SK-N-SH (cell line): ENCODE measurements at regions of chr16 and their contacts with region 1.

Region 1: GRCh38 chr16:81006814-81007696 is at the starts of genes CENPN and CMC2:
- DNase-seq: peak; percentile 94
- H3K4me3 ChIP-seq: peak within 1 kb of the TSS; percentile 94 to 97
- H3K27ac ChIP-seq: peak within 1 kb of the TSS; percentile 95 to 99
- H3K4me1 ChIP-seq: peaks cover 0 to 15% of the 10 kb centered on the region in 2 experiments; a peak in 2 of 4 replicates
- H3K27me3 ChIP-seq: no peaks in the 10 kb centered on the region
- CTCF ChIP-seq: peak; percentile 5; the same call in 1 of the 2 replicates
- EP300 ChIP-seq: peak in 1 of 2 experiments; percentile 66; a peak in 2 of 4 replicates
- RAD21 ChIP-seq: no peak
- polyA plus RNA-seq, gene CENPN: 13.9 and 35.3 TPM in 2 replicates
- polyA plus RNA-seq, gene CMC2: 121 and 135 TPM in 2 replicates

Region 2: GRCh38 chr16:80751190-80751589 is 255.9 kb before region 1 on chr16:
- CTCF ChIA-PET with region 1: no interaction called
- POLR2A ChIA-PET with region 1: no interaction called
- DNase-seq: no peak
- H3K4me3 ChIP-seq: no peak overlapping the region
- H3K27ac ChIP-seq: no peak overlapping the region
- H3K4me1 ChIP-seq: no peaks in the 10 kb centered on the region
- H3K27me3 ChIP-seq: no peaks in the 10 kb centered on the region
- CTCF ChIP-seq: no peak
- EP300 ChIP-seq: no peak
- RAD21 ChIP-seq: no peak

Region 3: DNA sequence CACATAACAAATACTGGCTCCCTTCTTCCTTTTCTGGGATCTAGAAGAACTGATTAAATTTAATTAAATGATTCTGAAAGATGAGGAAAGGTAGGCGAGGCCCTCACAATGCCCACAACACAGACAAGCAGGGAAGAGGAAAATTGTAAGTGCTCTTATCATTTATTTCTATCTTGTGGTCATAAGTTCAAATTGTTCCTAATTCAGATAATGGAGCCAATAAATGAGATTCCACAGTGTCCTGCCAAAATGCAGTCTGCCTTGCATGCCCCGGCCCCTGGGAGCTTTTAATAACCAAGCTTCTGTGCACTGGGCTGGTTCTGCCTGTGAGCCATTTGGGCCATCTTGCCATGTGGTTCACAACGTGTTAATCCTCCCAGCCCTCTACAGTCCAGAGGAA is 97.3 kb before region 1 on chr16:
- CTCF ChIA-PET with region 1: no interaction called
- POLR2A ChIA-PET with region 1: no interaction called
- DNase-seq: peak; percentile 53
- H3K4me3 ChIP-seq: no peak overlapping the region
- H3K27ac ChIP-seq: no peak overlapping the region
- H3K4me1 ChIP-seq: peaks cover 0 to 6% of the 10 kb centered on the region in 2 experiments; a peak in 2 of 4 replicates
- H3K27me3 ChIP-seq: no peaks in the 10 kb centered on the region
- CTCF ChIP-seq: no peak
- EP300 ChIP-seq: no peak
- RAD21 ChIP-seq: no peak; the same call in 1 of the 2 replicates

Region 4: DNA sequence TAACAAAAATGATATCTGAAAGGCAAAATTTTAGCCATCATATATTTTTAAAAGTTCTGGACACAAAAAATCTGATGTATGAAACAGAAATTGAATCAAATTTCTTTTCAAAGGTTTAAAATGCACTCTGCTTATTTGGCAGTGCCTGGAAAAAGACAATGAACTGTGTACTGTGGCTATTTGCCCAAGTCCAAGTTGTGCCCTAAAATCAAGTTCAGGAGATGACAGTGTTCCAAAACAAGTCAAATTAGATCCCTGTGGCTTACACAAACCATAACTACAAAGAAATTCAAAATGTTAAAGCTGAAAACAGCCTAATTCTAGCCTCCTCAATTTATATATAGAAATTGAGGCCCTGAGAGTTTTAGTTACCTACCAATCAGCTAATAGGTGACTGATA is 26.0 kb before region 1 on chr16:
- CTCF ChIA-PET with region 1: interaction called, 10 read pairs
- POLR2A ChIA-PET with region 1: no interaction called
- DNase-seq: no peak
- H3K4me3 ChIP-seq: no peak overlapping the region
- H3K27ac ChIP-seq: no peak overlapping the region
- H3K4me1 ChIP-seq: no peaks in the 10 kb centered on the region
- H3K27me3 ChIP-seq: no peaks in the 10 kb centered on the region
- CTCF ChIP-seq: no peak
- EP300 ChIP-seq: no peak
- RAD21 ChIP-seq: no peak

Region 5: DNA sequence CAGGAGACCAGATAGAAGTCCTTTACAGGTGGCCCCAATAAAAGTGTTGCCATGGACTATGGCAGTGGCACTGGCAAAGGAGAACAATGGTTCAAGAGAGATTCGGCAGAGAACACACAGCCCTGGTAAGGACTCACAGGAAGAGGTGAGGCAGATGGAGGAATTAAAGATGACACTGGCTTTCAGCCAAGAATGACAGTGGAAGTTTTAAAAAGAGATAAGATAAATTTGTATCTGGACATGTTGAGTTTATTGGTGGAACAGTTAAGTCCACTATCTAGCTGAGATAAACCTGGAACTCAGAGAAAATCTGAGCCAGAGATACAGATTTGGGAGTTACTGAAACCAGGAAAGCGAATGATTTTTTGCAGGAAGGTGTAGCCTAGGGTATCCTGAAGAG is 20.5 kb before region 1 on chr16:
- CTCF ChIA-PET with region 1: interaction called, 24 read pairs
- POLR2A ChIA-PET with region 1: no interaction called
- DNase-seq: no peak
- H3K4me3 ChIP-seq: no peak overlapping the region
- H3K27ac ChIP-seq: no peak overlapping the region
- H3K4me1 ChIP-seq: peaks cover 0 to 2% of the 10 kb centered on the region in 2 experiments; a peak in 1 of 4 replicates
- H3K27me3 ChIP-seq: no peaks in the 10 kb centered on the region
- CTCF ChIP-seq: no peak
- EP300 ChIP-seq: no peak
- RAD21 ChIP-seq: no peak

Region 6: DNA sequence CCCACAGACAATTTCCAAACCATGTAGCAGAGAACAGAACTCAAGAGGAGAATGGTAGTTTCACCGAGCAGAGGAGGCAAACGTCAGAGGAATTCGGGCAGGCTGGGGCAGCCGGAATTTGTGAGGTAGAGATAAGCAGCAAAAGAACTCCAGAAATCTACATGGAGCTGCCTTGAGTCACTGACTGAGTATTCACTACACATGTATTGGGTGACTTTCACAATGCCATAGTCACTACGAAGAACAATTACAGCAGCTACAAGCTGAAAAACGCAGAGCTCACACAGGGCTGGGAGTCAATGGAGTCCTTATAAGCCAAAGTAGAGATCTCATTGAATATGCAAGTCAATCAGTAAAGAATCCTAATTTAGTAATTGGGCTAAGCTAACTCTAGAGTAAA is 13.7 kb before region 1 on chr16:
- CTCF ChIA-PET with region 1: interaction called, 46 read pairs
- POLR2A ChIA-PET with region 1: no interaction called
- DNase-seq: no peak
- H3K4me3 ChIP-seq: peak overlapping the region; percentile 26 to 45; a peak in 3 of 4 replicates
- H3K27ac ChIP-seq: peak overlapping the region; percentile 60 to 84; a peak in 3 of 4 replicates
- H3K4me1 ChIP-seq: peaks cover 0 to 17% of the 10 kb centered on the region in 2 experiments; a peak in 2 of 4 replicates
- H3K27me3 ChIP-seq: no peaks in the 10 kb centered on the region
- CTCF ChIP-seq: no peak
- EP300 ChIP-seq: no peak
- RAD21 ChIP-seq: no peak

Region 7: GRCh38 chr16:81035398-81035974 is 28.4 kb after region 1 on chr16 and contains the start of gene ATMIN:
- CTCF ChIA-PET with region 1: interaction called, 21 read pairs
- POLR2A ChIA-PET with region 1: interaction called, 3 read pairs
- DNase-seq: peak; percentile 98
- H3K4me3 ChIP-seq: peak within 1 kb of the TSS; percentile 67 to 86
- H3K27ac ChIP-seq: peak within 1 kb of the TSS in 1 of 2 experiments; percentile 65; a peak in 2 of 4 replicates
- H3K4me1 ChIP-seq: peaks cover 0 to 13% of the 10 kb centered on the region in 2 experiments; a peak in 2 of 4 replicates
- H3K27me3 ChIP-seq: no peaks in the 10 kb centered on the region
- CTCF ChIP-seq: peak; percentile 98
- EP300 ChIP-seq: no peak
- RAD21 ChIP-seq: peak; percentile 64
- polyA plus RNA-seq, gene ATMIN: 15.3 and 20.4 TPM in 2 replicates

Region 8: DNA sequence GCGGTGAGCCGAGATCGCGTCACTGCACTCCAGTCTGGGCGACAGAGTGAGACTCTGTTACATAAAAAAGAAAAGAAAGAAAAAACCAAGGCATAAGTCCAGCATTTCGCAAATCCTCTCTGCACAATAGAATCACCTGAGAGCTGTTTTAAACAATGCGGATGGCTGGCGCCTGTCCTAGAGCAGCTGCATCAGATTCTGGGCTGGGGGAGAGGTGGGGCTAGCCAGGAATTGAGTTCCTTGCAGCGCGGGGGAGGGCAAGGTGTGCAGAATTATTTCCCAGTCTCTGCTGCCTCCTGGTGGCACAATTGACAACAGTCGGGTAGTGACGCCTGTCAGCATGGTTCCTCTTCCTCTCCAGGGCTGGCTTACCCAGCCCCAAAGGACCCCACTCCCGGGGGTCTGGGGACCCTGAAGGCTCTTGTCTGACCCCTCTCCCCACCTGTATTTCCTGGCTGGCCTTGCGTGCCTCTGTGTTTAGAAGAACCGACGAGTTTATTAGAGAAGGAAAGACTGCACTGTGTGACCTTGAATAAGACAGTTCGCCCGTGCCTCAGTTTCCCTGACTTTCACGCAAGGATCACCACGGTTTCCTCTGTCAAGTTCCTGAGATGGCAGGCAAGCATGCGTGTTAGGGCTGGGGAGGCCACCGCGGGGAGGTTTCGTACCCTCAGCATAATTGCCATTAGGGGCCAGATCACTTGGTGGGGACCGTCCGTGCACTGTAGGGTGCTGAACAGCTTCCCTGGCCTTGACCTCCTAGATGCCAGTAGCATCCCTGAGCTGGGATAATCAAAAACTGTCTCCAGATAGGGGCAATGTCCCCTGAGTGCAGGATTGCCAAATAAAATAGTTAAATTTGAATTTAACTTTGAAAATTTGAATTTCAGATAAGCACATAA is 731.1 kb after region 1 on chr16:
- CTCF ChIA-PET with region 1: interaction called, 13 read pairs
- POLR2A ChIA-PET with region 1: no interaction called
- DNase-seq: peak; percentile 84
- H3K4me3 ChIP-seq: peak overlapping the region in 1 of 2 experiments; percentile 52; a peak in 1 of 4 replicates
- H3K27ac ChIP-seq: no peak overlapping the region
- H3K4me1 ChIP-seq: peaks cover 0 to 4% of the 10 kb centered on the region in 2 experiments; a peak in 1 of 4 replicates
- H3K27me3 ChIP-seq: no peaks in the 10 kb centered on the region; the same call in 1 of the 2 replicates
- CTCF ChIP-seq: peak; percentile 85
- EP300 ChIP-seq: no peak
- RAD21 ChIP-seq: peak; percentile 96